Cardiac septum (tissue), 1 donor: ENCODE measurements at regions of chr9 and their contacts with region 1.

Region 1: DNA sequence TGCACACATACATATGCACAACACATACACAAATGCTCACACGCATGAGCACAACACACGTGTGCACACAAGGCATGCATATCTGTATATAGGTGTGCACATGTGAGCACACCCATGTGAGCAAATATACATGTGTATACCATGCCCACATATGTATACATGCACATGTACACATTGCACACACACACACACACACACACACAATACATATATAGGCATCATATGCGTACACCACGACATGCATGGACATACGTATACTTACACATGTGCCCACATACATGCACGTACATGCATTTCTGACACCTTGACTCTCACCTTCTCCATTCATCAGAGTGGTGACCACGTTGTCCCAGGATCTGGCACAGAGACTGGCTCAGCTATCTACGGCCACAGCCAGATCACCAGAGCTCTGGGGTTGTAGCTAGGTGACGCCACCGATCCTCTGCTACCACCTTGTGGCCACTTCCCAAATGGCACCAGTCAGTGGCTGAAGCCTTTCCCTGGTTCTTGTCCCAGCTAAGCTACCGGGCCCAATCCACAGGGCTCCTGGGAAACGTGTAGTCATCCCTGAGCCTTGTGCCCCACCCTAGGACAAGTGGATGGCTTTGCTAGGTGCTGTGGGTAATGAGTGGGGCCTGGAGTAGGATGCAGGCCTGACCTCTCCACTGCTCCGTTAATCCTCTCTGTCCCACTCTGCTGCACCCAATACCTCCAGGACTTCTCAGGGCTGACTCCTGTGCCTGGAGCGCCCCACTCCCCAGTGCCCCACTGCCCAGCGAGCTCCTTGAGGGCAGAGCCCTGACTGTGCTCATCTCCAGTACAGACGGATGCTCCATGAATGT is 194.4 kb downstream of the RGS3 start:
- DNase-seq: peak; percentile 93

Region 2: GRCh38 chr9:113275157-113276131 is 382.5 kb before region 1 on chr9 and contains the starts of genes CDC26 and PRPF4:
- intact Hi-C with region 1: loop called (anchors 2 kb)
- DNase-seq: peak; percentile 99
- total RNA-seq, gene CDC26: 35.1 TPM
- total RNA-seq, gene PRPF4: 10.5 TPM

Region 3: GRCh38 chr9:113401027-113401792 is 256.7 kb before region 1 on chr9 and contains the start of gene ALAD:
- intact Hi-C with region 1: loop called (anchors 5 kb)
- DNase-seq: peak; percentile 100
- total RNA-seq, gene ALAD: 68.2 TPM

Region 4: DNA sequence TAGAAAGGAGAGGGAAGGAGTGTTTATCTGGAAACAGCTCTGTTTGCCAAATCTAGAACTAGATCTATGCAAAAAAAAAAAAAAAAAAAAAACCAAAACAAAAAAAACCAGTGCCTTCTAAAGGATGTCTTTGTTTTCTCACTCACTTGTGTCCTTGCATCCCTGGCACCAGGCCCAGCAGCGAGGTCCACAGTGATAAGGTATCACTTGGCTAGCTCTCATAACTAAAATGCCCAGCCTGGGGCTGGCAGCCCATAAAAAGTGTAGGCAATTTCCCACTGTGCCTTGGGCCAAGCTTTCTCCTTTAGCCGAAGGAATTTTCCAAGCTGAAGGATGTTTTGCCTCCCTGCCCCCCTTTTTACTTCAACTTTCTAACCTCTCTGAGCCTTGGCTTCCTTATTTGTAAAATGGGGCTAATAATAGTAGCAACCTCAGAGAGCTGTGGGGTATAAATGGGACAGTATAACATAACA is 173.6 kb before region 1 on chr9:
- intact Hi-C with region 1: no loop called
- DNase-seq: peak; percentile 87

Region 5: DNA sequence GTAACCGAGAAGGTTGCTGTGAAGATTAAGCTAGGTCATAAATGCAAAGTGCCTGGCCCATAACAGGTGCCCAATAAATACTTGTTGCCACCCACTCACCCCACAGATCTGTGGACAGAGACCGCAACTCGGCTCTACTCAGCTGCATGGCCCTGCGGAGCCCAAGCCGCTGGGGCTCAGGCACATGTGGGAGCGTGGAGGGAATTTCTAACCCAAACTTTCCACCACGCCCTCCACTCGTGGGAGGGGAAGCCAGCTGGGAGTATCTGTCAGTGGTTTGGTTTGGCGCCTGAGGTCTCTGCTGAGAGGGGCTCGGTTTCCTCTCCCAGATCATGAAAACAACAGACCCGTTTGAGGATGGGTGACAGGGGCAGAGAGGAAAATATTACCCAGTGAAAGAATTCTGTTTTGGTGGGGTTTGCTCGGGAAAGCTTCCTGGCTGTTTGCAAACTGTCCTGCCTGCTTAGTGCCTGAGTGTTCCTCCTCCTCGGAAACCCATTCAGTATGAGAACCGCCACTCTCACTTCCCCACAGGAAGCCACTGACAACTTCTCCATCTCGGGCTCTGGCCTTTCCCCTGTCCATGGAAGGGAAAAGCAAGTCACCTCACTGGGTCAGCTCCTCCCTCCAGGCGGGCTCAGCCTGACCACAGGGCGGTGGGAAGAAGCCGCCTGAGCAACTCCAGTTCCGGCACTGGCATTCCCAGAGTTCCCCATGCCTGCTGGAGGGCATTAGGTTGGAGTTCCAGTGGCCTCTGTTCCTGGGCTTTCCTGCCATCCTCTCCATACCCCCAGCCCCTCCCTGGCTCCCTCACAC is 134.3 kb before region 1 on chr9:
- intact Hi-C with region 1: loop called (anchors 10 kb)
- DNase-seq: peak; percentile 87

Region 6: GRCh38 chr9:113609562-113610318 is 48.2 kb before region 1 on chr9:
- intact Hi-C with region 1: no loop called
- DNase-seq: peak; percentile 91

Region 7: DNA sequence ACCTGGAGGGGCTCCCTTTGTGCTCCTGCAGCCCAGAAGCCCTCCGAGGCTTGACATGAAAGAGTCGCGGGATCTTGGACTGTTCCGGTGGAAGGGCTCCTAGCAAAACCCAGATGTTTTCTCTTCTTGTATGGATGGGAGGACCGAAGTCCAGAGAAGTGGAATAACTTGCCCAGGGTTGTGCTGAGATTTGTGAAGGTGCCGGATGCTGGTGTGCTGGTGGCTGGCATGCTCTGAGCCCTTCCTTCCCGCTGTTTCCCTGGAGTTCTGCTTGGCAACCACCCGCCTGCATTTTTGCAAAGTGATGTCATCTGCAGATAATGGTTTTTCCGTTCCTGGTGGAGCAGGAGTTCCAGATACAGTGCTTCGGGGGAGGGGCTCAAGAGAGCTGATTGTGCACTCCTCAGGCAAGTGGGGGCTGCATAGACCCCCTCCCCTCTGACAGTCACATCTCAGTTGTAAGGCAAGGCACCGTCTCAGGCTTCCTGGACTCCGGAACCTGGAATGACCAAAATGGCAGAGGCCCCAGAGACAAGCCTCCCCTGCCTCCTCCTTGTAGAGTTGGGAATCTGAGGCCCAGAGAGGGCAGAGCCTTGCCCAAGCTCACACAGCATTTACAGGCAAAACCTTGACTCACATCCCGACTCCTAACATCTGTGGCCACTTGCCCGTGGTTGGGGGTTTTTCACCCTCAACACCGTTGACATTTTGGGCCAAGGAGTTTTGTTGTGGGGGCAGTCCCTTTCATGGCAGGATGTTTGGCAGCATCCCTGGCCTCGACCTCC is 37.4 kb before region 1 on chr9:
- intact Hi-C with region 1: loop called (anchors 2 kb)
- DNase-seq: no peak

Region 8: GRCh38 chr9:113712023-113712422 is 54.1 kb after region 1 on chr9:
- intact Hi-C with region 1: no loop called
- DNase-seq: no peak

Region 9: DNA sequence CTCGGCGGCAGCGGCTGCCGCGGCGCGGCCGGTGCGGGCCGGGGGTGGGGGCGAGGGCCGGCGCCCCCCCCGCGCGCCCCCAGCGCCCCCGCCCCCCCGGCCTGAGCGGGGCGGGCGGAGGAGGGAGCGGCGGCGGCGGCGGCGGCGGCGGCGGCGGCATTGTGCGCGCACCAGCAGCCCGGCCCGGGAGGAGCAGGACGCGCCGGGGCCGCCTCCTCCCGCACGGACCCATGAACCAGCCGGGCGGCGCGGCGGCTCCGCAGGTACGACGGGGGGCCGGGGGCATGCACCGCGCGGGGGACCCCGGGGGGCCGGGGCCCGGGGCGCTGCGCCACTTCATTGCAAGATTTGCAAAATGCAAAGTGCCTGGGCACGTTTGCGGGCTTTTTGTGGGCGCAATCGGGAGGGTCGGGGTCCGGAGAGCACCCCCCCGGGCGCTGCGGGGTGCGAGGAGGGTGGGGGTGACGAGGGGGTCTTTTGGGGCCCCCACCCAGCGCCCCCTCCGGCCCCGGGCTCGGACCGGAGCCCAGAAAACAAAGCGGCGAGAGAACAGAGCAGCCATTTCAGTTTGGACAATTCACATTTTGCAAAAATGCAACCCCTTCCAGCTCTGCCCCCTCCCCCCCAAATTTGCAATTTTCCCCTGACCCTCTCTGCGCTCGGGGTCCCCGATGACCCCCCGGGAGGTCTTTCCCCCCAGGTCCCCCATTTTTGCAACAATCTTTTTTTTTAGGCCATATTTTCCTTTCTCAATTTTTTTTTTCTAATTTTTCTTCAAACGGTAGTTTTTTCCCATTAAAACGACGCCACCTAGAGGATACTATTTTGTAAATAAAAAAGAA is 218.4 kb after region 1 on chr9 and contains the start of gene ZNF618:
- intact Hi-C with region 1: no loop called
- DNase-seq: no peak
- total RNA-seq, gene ZNF618: 1.7 TPM